WTC11 (cell line): ENCODE measurements at regions of chr3 and their contacts with region 1.

Region 1: GRCh38 chr3:15953841-15954240 is 156.1 kb upstream of the ANKRD28 start:
- DNase-seq: no peak
- ATAC-seq: no peak
- H3K4me3 Mint-ChIP-seq: no peak overlapping the region
- H3K27ac Mint-ChIP-seq: no peak overlapping the region
- H3K4me1 Mint-ChIP-seq: no peaks in the 10 kb centered on the region
- H3K27me3 Mint-ChIP-seq: no peaks in the 10 kb centered on the region
- CTCF ChIP-seq: no peak

Region 2: DNA sequence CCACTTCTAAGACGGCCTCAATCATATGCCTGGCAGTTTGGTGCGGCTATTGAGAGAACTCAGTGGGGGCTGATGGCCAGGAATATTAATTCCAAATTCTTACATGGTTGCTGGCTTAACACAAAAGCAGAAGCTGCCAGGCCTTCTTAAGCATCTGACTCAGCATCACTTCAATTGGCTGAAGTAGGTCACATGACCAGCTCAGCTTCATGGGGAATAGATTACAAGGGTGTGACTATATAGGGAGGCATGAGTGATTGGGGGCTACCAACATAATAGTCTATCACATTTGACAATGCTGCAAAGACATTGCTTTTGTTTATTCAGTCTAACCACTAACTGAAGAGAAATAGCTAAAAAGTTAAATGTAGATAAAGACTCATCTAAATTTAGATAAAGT is 54.5 kb before region 1 on chr3:
- CTCF ChIA-PET with region 1: no interaction called
- POLR2A ChIA-PET with region 1: no interaction called
- DNase-seq: no peak
- ATAC-seq: peak; percentile 22; the same call in 1 of the 2 replicates
- H3K4me3 Mint-ChIP-seq: no peak overlapping the region
- H3K27ac Mint-ChIP-seq: no peak overlapping the region
- H3K4me1 Mint-ChIP-seq: peaks cover 7% of the 10 kb centered on the region
- H3K27me3 Mint-ChIP-seq: no peaks in the 10 kb centered on the region; the same call in 1 of the 2 replicates
- CTCF ChIP-seq: no peak

Region 3: DNA sequence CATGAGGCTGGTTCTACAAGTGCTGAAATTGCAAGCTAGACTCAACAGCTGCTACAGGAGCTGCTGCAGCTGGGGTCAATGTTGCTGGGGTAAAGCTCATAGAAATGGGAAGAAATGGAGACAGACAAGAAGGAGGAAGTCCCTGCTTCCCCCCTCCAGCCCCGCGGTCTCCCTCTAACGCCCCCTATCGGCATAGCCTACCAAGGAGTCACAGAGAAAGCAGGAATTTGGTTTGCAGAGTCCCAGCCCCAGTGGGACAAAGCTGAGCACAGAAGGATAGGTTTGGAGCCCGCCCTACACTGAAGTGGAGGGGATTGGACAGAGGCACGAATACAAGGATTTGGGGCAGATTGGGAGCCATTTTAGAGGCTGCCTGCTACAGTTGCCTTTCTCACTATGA is 20.8 kb after region 1 on chr3:
- CTCF ChIA-PET with region 1: interaction called, 10 read pairs
- POLR2A ChIA-PET with region 1: no interaction called
- DNase-seq: peak; percentile 78
- ATAC-seq: peak; percentile 95
- H3K4me3 Mint-ChIP-seq: no peak overlapping the region
- H3K27ac Mint-ChIP-seq: no peak overlapping the region
- H3K4me1 Mint-ChIP-seq: 0 out of 2 replicates have a peak, but pooled peaks cover 8% of the 10 kb centered on the region
- H3K27me3 Mint-ChIP-seq: no peaks in the 10 kb centered on the region
- CTCF ChIP-seq: peak; percentile 54